ENCODE measurements at regions of chr3 and their contacts with region 1.

Region 1: GRCh38 chr3:158659454-158660237 is 12.8 kb downstream of the LXN start:
- H3K4me3 Mint-ChIP-seq: no peak overlapping the region
- H3K27ac Mint-ChIP-seq: no peak overlapping the region
- H3K4me1 Mint-ChIP-seq: no peaks in the 10 kb centered on the region
- H3K27me3 Mint-ChIP-seq: no peaks in the 10 kb centered on the region

Region 2: DNA sequence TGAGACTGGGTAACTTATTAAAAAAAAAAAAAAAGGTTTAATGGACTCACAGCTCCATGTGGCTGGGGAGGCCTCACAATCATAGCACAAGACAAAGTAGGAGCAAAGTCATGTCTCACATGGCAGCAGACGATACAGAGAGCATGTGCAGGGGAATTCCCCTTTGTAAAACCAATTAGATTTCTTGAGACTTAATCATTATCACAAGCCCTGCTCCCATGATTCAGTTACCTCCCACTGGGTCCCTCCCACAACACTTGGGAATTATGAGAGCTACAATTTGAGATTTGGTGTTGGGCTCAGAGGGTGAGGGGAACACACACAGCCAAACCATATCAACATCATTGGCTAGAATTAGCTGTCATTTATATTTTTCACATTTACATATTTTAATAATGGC is 328.8 kb before region 1 on chr3:
- intact Hi-C with region 1: no loop called
- H3K4me3 Mint-ChIP-seq: no peak overlapping the region
- H3K27ac Mint-ChIP-seq: peak overlapping the region; percentile 40
- H3K4me1 Mint-ChIP-seq: peaks cover 29% of the 10 kb centered on the region
- H3K27me3 Mint-ChIP-seq: no peaks in the 10 kb centered on the region

Region 3: DNA sequence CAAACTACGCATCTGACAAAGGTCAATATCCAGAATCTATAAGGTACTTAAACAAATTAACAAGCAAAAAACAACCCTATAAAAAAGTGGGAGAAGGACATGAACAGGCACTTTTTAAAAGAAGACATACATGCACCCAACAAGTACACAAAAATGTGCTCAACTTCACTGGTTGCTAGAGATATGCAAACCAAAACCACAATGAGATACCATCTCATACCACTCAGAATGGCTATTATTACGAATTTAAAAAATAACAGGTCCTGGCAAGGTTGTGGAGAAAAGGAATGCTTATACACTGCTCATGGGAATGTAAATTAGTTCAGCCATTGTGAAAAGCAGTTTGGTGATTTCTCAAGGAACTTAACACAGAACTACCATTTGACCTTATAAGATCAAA is 264.2 kb before region 1 on chr3:
- intact Hi-C with region 1: no loop called
- H3K4me3 Mint-ChIP-seq: no peak overlapping the region
- H3K27ac Mint-ChIP-seq: no peak overlapping the region
- H3K4me1 Mint-ChIP-seq: no peaks in the 10 kb centered on the region
- H3K27me3 Mint-ChIP-seq: no peaks in the 10 kb centered on the region

Region 4: DNA sequence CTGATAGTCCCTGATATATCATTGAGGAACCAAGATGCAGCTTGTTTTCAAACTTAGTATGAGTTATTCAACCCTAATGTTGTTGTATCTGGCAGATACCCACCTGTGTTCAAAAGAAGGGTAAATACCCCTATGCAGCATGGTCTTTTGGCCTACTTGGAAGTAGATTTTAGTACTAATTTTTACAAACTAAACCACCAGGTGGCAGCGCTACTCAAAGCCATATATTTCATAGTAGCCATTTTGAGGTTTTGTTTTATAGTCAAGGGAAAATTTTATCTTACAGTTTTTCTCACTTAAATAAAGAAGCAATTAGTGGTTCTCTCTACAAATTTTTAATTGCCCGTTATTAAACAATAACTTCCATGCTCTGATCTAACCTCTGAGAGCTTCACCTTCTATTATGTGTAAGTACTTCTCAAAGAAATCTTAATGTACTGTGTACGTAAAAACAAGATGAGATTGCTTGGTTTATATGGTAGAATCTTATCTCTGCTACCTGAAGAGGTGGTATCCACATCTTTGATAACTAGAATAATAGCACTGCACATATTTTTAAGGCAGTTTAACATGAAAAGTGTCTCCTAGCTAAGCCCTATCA is 120.1 kb before region 1 on chr3:
- intact Hi-C with region 1: loop called (anchors 10 kb)
- H3K4me3 Mint-ChIP-seq: no peak overlapping the region
- H3K27ac Mint-ChIP-seq: no peak overlapping the region
- H3K4me1 Mint-ChIP-seq: no peaks in the 10 kb centered on the region
- H3K27me3 Mint-ChIP-seq: no peaks in the 10 kb centered on the region

Region 5: GRCh38 chr3:158727206-158728060 is 67.8 kb after region 1 on chr3:
- intact Hi-C with region 1: loop called (anchors 1 kb)
- H3K4me3 Mint-ChIP-seq: peak overlapping the region; percentile 37
- H3K27ac Mint-ChIP-seq: peak overlapping the region; percentile 91
- H3K4me1 Mint-ChIP-seq: peaks cover 31% of the 10 kb centered on the region
- H3K27me3 Mint-ChIP-seq: peaks cover 13% of the 10 kb centered on the region

Region 6: DNA sequence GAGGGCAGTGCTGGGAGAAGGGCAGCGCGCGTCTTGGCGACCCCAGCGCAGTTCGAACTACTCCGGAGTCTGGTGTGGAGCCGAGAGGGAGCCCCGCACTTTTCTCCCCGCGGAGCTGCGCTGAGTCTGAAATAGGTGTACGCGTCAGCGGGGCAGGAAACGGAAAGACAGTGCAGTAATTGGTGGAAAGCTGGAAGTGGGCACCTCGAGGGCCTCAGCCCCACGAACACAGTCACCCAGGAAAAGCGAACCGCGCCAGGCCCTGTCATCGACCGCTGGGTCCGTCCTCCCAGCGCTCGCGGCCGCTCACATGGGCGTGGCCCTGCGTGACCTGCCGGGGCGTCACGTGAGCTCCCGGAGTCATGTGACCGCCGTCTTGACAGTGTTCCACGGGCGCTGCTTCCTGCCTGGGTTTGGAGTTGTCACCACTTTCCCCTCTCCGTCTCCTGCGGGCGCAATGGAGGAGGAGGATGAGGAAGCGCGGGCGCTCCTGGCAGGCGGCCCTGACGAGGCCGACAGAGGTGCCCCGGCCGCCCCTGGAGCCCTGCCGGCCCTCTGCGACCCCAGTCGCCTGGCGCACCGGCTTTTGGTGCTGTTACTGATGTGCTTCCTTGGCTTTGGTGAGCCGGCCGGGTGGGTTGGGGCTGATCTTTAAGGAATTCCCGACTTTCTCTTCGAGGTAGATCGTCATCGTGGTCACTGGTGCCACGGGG is 142.2 kb after region 1 on chr3 and contains the start of gene MFSD1:
- intact Hi-C with region 1: no loop called
- H3K4me3 Mint-ChIP-seq: peak within 1 kb of the TSS; percentile 85
- H3K27ac Mint-ChIP-seq: peak within 1 kb of the TSS; percentile 96
- H3K4me1 Mint-ChIP-seq: peaks cover 29% of the 10 kb centered on the region
- H3K27me3 Mint-ChIP-seq: peaks cover 1% of the 10 kb centered on the region

Region 7: DNA sequence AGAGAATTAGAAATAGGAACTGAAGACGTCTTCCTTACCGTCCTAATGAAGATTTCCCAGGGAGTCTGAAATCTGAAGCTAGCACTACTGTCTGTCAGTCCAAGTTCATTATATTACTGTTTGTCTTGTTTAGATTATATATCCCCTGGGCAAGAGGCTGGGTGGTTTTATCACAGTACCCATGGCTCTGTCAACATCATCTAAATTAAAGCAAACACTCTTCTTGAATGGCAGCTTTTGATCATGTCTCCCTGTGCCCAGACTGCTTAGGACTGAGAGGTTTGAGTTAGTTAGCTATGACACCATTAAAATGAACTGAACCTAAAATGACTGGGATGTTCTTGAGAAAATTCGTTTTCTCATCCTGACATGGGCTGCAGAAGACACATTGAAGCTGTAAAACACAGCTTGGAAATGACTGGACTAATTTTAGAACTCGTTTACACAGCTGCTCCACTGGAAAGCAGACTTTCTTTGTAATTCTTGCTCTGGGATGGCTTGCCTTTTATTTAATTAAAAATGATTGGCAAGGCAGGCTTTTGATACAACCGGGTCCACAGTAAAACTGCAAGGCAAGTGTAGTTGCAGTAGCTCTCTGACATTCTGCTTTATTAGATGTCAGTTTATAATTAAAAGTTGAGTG is 385.7 kb after region 1 on chr3:
- intact Hi-C with region 1: no loop called
- H3K4me3 Mint-ChIP-seq: no peak overlapping the region
- H3K27ac Mint-ChIP-seq: no peak overlapping the region
- H3K4me1 Mint-ChIP-seq: no peaks in the 10 kb centered on the region
- H3K27me3 Mint-ChIP-seq: no peaks in the 10 kb centered on the region

Region 8: DNA sequence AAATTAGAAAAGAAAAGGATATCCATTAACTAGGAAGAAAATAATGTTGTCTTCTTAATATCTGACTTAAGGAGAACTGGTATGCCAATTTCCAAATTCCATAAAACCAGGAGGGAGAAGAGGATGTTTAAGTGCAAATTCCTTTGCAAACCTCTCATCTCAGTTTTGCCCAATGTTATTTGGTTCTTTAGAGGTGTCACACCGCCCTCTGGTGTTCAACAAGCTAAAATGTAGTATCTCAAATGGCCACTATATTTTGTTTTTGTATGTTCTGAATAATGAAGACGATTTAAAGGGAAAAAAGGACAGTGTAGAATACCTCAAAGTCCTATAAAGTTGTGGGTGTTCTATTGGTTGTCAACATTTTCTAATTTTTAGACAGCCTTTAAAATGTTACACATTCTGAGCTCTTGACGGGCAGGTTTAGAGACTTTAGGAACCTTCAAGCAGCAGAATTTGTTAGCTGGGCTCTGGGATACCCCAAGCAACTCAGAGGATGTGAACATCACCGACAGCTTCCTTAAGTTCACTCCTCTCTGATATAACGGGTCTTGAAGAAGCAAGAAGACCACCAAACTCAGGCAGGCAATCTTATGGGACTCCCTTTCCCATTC is 600.5 kb after region 1 on chr3:
- intact Hi-C with region 1: loop called (anchors 10 kb)
- H3K4me3 Mint-ChIP-seq: no peak overlapping the region
- H3K27ac Mint-ChIP-seq: no peak overlapping the region
- H3K4me1 Mint-ChIP-seq: no peaks in the 10 kb centered on the region
- H3K27me3 Mint-ChIP-seq: peaks cover 3% of the 10 kb centered on the region